ENCODE measurements at regions of chr19 and their contacts with region 1.

Region 1: DNA sequence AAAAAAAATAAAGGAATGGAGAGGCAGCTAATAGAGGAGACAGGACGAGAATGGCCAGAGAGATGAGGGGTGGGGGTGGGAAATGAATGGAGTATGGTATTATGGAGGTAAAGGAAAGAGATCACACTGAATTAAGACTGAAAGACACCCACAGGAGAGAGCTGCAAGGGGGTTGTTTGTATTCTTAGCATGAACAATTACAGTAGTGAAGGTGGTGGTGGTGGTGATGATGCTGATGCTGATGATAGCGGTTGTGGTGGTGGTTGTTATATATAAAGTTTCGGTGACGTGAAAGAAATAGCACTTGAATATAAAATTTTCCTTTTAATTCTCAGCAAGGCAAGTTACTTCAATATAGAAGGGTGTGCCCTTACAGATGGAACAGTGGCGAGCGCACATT is 2.8 kb upstream of the ADGRE3 start:
- DNase-seq: no peak
- ATAC-seq: no peak
- H3K4me3 ChIP-seq: no peak overlapping the region
- H3K4me3 Mint-ChIP-seq: no peak overlapping the region
- H3K27ac ChIP-seq: no peak overlapping the region
- H3K27ac Mint-ChIP-seq: no peak overlapping the region
- H3K4me1 ChIP-seq: peaks cover 0 to 6% of the 10 kb centered on the region in 2 experiments
- H3K4me1 Mint-ChIP-seq: peaks cover 0 to 13% (median 4%) of the 10 kb centered on the region in 3 donors
- H3K27me3 ChIP-seq: peaks cover 0 to 13% of the 10 kb centered on the region in 2 experiments
- H3K27me3 Mint-ChIP-seq: peaks cover 15 to 16% of the 10 kb centered on the region in 2 donors

Region 2: DNA sequence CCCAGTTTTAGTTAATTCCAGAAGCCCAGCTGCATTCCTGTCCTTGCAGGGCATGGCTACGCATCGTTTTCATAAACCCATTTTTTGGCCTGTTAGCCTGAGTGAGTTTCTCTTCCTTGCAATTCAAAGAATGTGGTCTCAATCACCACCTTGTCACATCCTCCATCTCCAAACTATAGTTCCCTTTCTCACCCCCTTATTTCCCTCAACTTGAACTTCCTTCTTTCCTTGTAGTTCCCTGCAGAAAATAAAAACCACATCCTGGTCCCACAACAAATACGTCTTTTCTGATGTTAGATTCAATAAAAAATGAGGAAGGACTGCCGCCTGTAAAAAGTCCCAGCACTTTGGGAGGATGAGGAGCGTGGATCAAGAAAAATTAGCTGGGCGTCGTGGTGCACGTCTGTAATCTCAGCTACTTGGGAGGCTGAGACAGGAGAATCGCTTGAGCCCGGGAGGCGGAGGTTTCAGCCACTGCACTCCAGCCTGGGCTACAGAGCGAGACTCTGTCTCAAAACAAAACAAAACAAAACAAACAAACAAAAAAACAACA is 16.0 kb before region 1 on chr19:
- CTCF ChIA-PET with region 1: no interaction called
- POLR2A ChIA-PET with region 1: interaction called in 1 of 2 experiments, 10 read pairs
- DNase-seq: no peak
- ATAC-seq: no peak
- H3K4me3 ChIP-seq: no peak overlapping the region
- H3K4me3 Mint-ChIP-seq: no peak overlapping the region
- H3K27ac ChIP-seq: no peak overlapping the region
- H3K27ac Mint-ChIP-seq: no peak overlapping the region
- H3K4me1 ChIP-seq: no peaks in the 10 kb centered on the region
- H3K4me1 Mint-ChIP-seq: peaks cover 0 to 2% (median 0%) of the 10 kb centered on the region in 3 donors
- H3K27me3 ChIP-seq: peaks cover 0 to 7% of the 10 kb centered on the region in 2 experiments
- H3K27me3 Mint-ChIP-seq: peaks cover 11% of the 10 kb centered on the region in 2 donors